CD4-positive, alpha-beta T cell (primary cell): ENCODE measurements at regions of chr3 and their contacts with region 1.

Region 1: DNA sequence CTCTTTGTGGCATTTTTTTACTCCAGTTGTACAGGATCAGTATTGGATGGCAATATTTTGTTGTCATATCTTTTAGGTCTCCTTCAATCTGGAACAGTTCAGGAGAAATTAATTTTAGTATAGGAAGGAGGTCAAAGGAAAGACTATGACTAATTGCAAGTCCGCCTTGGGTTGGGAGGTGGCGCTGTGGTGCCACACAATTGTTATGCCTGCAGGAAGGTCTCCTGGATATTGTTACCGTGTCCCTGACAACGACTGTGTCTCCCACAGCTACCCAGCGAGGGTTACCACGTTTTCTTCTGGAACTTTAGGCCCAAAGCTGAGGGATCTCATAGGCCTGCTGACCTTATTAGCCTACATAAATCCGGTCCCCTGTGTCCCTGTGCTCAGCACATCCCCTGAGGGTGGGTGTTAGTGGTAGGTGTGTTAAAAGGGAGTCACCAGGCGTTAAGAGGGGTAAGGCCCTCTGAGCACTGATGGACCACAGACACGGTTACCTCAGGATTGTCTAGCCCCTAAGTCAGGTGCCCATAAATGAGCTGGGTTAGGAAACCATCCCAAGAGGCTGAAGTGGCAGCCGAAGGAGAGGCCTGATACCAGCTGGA is 31.5 kb downstream of the KCNAB1 start:
- DNase-seq: peak; percentile 30 to 72 (median 44)
- ATAC-seq: peak; percentile 66
- H3K4me3 ChIP-seq: no peak overlapping the region
- H3K4me3 Mint-ChIP-seq: no peak overlapping the region
- H3K27ac ChIP-seq: no peak overlapping the region
- H3K27ac Mint-ChIP-seq: no peak overlapping the region
- H3K4me1 ChIP-seq: no peaks in the 10 kb centered on the region
- H3K4me1 Mint-ChIP-seq: no peaks in the 10 kb centered on the region
- H3K27me3 ChIP-seq: no peaks in the 10 kb centered on the region
- H3K27me3 Mint-ChIP-seq: no peaks in the 10 kb centered on the region
- CTCF ChIP-seq: peak; percentile 83

Region 2: DNA sequence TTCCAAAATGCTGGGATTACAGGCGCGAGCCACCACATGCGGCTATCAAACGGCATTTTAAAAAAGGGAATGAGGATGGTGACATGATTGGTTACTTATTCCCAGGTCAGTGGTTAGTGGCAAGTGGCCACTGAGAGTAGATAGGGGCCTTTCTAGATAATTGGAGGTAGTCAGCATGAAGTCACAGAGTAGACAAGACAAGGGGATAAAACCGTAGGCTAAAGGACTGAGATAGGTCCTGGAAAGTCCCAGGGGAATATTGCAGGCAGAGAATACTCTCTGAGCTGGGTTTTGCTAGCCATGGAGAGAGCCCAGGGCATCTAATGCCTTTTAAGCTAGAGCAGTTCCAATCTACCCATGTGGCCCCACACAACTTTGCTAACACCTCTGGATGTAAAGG is 20.6 kb after region 1 on chr3:
- CTCF ChIA-PET with region 1: no interaction called
- POLR2A ChIA-PET with region 1: no interaction called
- intact Hi-C with region 1: no loop called
- DNase-seq: no peak
- ATAC-seq: no peak
- H3K4me3 ChIP-seq: no peak overlapping the region
- H3K4me3 Mint-ChIP-seq: no peak overlapping the region
- H3K27ac ChIP-seq: no peak overlapping the region
- H3K27ac Mint-ChIP-seq: no peak overlapping the region
- H3K4me1 ChIP-seq: no peaks in the 10 kb centered on the region
- H3K4me1 Mint-ChIP-seq: no peaks in the 10 kb centered on the region
- H3K27me3 ChIP-seq: peaks cover 3 to 4% of the 10 kb centered on the region in 2 experiments
- H3K27me3 Mint-ChIP-seq: peaks cover 29% of the 10 kb centered on the region
- CTCF ChIP-seq: no peak

Region 3: DNA sequence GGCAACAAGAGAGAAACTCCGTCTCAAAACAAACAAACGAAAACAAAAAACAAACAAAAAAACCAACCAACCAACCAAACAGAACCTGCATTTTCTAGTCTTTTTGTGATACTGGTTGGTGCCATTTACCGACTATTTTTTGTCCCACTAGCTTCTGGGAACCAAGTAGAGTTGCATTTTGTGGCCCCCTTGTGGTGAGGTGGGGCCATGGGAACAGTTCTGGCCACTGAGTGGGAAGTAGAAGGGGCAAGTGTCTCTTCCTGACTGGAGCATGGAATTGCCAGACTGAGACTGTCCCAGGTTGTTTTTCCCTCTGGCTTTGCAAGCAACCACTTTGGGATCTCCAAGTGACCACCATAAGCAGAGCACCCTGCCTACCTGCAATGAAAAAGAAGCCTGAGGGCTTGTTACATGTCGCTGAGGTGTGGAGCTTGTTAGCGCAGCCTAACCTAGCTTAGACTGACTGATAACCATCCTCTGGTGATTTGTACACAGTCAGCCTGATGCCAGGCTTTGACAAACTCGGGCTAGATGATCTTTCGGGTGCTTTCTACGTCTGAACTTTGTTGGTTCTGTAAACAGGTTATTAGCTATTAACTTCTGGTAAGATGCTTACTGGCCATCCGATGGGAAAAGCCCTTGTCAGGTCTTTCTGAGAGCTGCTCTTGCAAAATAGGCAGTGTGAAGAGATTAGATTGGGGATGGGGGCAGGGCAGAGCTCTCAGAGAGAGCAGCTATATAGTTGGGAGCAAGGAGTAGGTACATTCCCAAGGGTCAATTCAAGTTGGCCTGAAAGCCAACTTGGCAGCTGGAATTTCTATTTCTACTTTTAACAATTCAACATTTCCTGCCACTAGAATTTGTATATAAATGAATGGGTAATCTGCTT is 230.8 kb after region 1 on chr3:
- CTCF ChIA-PET with region 1: interaction called, 11 read pairs
- POLR2A ChIA-PET with region 1: no interaction called
- intact Hi-C with region 1: no loop called
- DNase-seq: peak in 5 of 14 experiments; percentile 0 to 28 (median 8)
- ATAC-seq: no peak
- H3K4me3 ChIP-seq: no peak overlapping the region
- H3K4me3 Mint-ChIP-seq: no peak overlapping the region
- H3K27ac ChIP-seq: no peak overlapping the region
- H3K27ac Mint-ChIP-seq: no peak overlapping the region
- H3K4me1 ChIP-seq: no peaks in the 10 kb centered on the region
- H3K4me1 Mint-ChIP-seq: no peaks in the 10 kb centered on the region
- H3K27me3 ChIP-seq: peaks cover 0 to 5% of the 10 kb centered on the region in 2 experiments
- H3K27me3 Mint-ChIP-seq: peaks cover 4% of the 10 kb centered on the region
- CTCF ChIP-seq: peak; percentile 32

Region 4: DNA sequence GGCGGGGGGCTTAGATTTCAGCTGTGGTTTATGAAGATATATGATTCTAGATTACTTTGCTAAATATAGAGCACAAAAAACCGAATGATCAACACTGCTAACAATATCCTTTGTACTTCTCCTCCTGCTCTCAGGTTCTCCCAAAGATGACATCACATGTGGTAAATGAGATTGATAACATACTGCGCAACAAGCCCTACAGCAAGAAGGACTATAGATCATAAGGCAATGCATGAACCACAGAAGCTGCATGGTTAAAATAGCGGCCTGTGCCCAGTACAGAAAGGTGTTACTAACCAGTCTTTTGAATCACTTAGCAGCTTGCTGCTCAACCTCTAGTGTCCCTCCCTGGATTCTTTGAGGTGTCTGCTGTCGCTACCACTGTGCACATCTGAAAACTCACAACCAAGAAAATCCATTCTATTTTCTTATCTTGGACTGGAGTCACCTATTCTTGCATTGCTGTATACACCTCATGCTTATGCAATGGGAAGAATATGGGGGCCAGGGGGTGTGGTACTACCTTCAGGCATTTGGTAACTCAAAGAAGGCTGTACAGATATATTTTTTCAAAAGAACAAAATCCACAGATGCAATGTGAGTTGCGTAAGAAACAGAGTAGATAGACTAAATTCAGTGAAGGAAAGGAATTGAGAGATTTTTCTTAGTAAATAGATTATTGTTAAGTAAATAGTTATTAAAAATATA is 384.8 kb after region 1 on chr3:
- CTCF ChIA-PET with region 1: interaction called, 6 read pairs
- POLR2A ChIA-PET with region 1: no interaction called
- intact Hi-C with region 1: loop called (anchors 1 to 2 kb)
- DNase-seq: no peak
- ATAC-seq: no peak
- H3K4me3 ChIP-seq: no peak overlapping the region
- H3K4me3 Mint-ChIP-seq: no peak overlapping the region
- H3K27ac ChIP-seq: no peak overlapping the region
- H3K27ac Mint-ChIP-seq: no peak overlapping the region
- H3K4me1 ChIP-seq: no peaks in the 10 kb centered on the region
- H3K4me1 Mint-ChIP-seq: no peaks in the 10 kb centered on the region
- H3K27me3 ChIP-seq: no peaks in the 10 kb centered on the region
- H3K27me3 Mint-ChIP-seq: no peaks in the 10 kb centered on the region
- CTCF ChIP-seq: no peak

Region 5: DNA sequence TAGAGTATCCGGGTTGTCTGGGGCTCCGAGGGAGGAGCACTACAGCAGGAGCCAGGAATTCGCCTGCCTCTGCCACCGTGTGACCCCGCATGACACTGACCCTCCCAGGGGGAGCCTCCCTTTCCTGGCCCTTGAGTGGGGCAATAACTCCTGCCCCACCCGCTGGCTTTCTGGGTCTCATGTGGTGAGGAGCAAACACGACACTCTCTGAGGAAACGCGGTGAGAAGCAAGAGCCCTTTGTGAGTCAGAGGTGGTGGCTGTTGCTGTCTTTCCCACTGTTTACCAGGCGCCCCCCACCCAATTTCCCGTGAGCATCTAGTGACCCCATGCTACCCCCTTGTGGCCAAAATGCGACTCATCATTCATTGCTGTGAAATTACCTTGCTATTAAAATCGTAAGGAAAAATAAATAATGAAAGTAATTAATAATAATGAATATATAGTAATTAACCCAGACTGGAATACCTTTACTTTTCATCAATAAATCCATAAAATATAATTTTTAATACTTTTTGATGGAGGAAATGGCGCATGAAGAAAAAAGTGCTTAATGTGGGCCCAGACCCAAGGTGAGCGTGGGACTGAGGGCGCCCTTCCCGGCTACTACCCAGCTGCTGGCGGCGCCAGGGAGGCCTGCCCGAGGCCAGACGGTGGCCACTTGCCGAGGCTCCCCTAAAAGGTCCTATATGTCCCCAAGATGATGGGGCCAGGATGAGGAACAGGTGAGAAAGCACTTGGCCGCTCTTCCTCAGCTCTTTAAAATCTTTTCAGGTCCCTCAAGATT is 978.7 kb after region 1 on chr3:
- CTCF ChIA-PET with region 1: no interaction called
- POLR2A ChIA-PET with region 1: no interaction called
- intact Hi-C with region 1: loop called in 1 of 2 experiments (anchors 2 kb)
- DNase-seq: peak; percentile 57 to 94 (median 80)
- ATAC-seq: peak; percentile 69
- H3K4me3 ChIP-seq: peak overlapping the region; percentile 28
- H3K4me3 Mint-ChIP-seq: peak overlapping the region; percentile 80
- H3K27ac ChIP-seq: peak overlapping the region; percentile 80 to 92
- H3K27ac Mint-ChIP-seq: peak overlapping the region; percentile 98
- H3K4me1 ChIP-seq: peaks cover 80% of the 10 kb centered on the region
- H3K4me1 Mint-ChIP-seq: peaks cover 59% of the 10 kb centered on the region
- H3K27me3 ChIP-seq: no peaks in the 10 kb centered on the region
- H3K27me3 Mint-ChIP-seq: no peaks in the 10 kb centered on the region
- CTCF ChIP-seq: peak; percentile 87

Region 6: GRCh38 chr3:157201648-157202278 is 1049.8 kb after region 1 on chr3:
- CTCF ChIA-PET with region 1: no interaction called
- POLR2A ChIA-PET with region 1: no interaction called
- intact Hi-C with region 1: loop called in 1 of 2 experiments (anchors 5 kb)
- DNase-seq: peak in 3 of 14 experiments; percentile 34 to 57 (median 56)
- ATAC-seq: no peak
- H3K4me3 ChIP-seq: no peak overlapping the region
- H3K4me3 Mint-ChIP-seq: no peak overlapping the region
- H3K27ac ChIP-seq: no peak overlapping the region
- H3K27ac Mint-ChIP-seq: no peak overlapping the region
- H3K4me1 ChIP-seq: no peaks in the 10 kb centered on the region
- H3K4me1 Mint-ChIP-seq: peaks cover 5% of the 10 kb centered on the region
- H3K27me3 ChIP-seq: no peaks in the 10 kb centered on the region
- H3K27me3 Mint-ChIP-seq: no peaks in the 10 kb centered on the region
- CTCF ChIP-seq: peak; percentile 67